Activated CD4-positive, alpha-beta memory T cell treated with anti-CD3 and anti-CD28 coated beads for 36 hours (primary cell): ENCODE measurements at regions of chr6 and their contacts with region 1.

Region 1: DNA sequence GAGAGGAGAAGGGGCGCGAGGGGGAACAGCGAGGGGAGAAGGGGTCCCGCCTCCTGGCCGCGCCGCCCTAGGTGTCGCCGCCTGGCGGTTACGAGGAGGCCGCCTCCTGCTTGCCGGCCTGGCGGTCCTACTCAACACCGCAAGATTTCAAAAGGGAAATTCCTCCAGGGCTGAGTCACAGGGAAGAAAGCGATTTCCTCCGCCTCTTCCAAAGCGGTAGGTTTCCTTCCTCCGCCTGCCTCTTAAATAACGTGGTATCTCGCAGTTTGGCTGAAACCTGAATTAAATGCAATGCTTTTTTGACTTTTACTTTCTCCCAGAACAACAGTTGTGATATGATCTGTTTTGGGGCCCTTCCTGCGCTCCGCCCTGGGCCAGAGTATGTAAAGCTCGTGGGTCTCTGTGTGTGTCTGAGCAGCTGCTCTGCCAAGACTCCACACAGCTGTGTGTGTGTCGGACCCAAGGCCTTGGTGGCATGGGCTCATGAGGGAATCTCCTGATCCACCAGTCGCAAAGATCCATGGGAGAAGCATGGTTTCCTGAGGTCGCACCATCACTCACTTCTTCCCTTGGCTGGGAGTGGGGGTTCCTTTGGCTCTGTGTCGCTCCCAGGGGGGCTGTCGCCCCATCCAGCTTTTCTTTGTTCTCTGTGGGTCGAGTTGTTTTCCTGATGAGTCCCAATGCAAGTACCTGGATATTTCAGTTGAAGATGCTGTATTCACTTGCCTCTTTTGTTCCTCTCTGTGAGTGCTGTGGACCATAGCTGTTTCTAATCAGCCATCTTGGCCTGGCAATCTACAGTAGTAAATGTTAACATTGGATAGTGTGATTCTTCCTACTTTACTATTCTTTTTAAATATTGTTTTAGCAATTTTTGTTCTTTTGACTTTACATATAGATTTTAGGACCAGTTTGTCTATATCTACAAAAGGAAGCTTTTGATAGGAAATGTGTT is 31.6 kb upstream of the NOTCH4 start:
- DNase-seq: peak; percentile 80
- H3K4me3 Mint-ChIP-seq: peak overlapping the region; percentile 3
- H3K27ac Mint-ChIP-seq: peak overlapping the region; percentile 14
- H3K4me1 Mint-ChIP-seq: peaks cover 30% of the 10 kb centered on the region
- H3K27me3 Mint-ChIP-seq: peaks cover 21% of the 10 kb centered on the region

Region 2: GRCh38 chr6:32298663-32299267 is 43.3 kb after region 1 on chr6:
- CTCF ChIA-PET with region 1: no interaction called
- POLR2A ChIA-PET with region 1: no interaction called
- intact Hi-C with region 1: no loop called
- DNase-seq: no peak
- H3K4me3 Mint-ChIP-seq: no peak overlapping the region
- H3K27ac Mint-ChIP-seq: no peak overlapping the region
- H3K4me1 Mint-ChIP-seq: no peaks in the 10 kb centered on the region
- H3K27me3 Mint-ChIP-seq: peaks cover 14% of the 10 kb centered on the region

Region 3: GRCh38 chr6:32369675-32370074 is 114.2 kb after region 1 on chr6:
- CTCF ChIA-PET with region 1: interaction called, 5 read pairs
- POLR2A ChIA-PET with region 1: no interaction called
- intact Hi-C with region 1: loop called (anchors 10 kb)
- DNase-seq: peak; percentile 47
- H3K4me3 Mint-ChIP-seq: no peak overlapping the region
- H3K27ac Mint-ChIP-seq: no peak overlapping the region
- H3K4me1 Mint-ChIP-seq: peaks cover 8% of the 10 kb centered on the region
- H3K27me3 Mint-ChIP-seq: peaks cover 34% of the 10 kb centered on the region

Region 4: GRCh38 chr6:32393665-32394420 is 138.4 kb after region 1 on chr6:
- CTCF ChIA-PET with region 1: no interaction called
- POLR2A ChIA-PET with region 1: no interaction called
- intact Hi-C with region 1: loop called (anchors 10 kb)
- DNase-seq: no peak
- H3K4me3 Mint-ChIP-seq: no peak overlapping the region
- H3K27ac Mint-ChIP-seq: no peak overlapping the region
- H3K4me1 Mint-ChIP-seq: peaks cover 6% of the 10 kb centered on the region
- H3K27me3 Mint-ChIP-seq: peaks cover 19% of the 10 kb centered on the region

Region 5: DNA sequence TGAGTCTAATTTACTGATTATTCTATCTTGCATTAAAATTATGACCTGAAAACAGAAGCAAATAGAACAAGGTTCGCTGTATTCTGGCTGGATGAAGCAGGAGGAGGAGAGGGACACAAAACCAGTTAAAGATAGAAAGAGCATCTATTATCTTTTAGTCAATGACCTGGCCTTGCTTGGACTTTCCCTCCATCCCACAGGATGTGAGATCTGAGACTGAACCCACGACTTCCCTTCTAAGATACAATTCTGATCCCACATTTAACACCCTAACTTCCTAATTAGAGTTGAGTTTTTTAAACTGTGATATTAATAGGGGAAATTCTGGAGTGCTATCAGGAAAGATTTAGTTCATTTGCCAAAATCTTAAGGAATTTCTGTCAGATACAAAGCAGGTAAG is 482.6 kb after region 1 on chr6:
- CTCF ChIA-PET with region 1: no interaction called
- POLR2A ChIA-PET with region 1: no interaction called
- intact Hi-C with region 1: no loop called
- DNase-seq: no peak
- H3K4me3 Mint-ChIP-seq: no peak overlapping the region
- H3K27ac Mint-ChIP-seq: no peak overlapping the region
- H3K4me1 Mint-ChIP-seq: no peaks in the 10 kb centered on the region
- H3K27me3 Mint-ChIP-seq: peaks cover 21% of the 10 kb centered on the region